Gastrocnemius medialis (tissue), 4 donors: ENCODE measurements at regions of chr3 and their contacts with region 1.

Region 1: DNA sequence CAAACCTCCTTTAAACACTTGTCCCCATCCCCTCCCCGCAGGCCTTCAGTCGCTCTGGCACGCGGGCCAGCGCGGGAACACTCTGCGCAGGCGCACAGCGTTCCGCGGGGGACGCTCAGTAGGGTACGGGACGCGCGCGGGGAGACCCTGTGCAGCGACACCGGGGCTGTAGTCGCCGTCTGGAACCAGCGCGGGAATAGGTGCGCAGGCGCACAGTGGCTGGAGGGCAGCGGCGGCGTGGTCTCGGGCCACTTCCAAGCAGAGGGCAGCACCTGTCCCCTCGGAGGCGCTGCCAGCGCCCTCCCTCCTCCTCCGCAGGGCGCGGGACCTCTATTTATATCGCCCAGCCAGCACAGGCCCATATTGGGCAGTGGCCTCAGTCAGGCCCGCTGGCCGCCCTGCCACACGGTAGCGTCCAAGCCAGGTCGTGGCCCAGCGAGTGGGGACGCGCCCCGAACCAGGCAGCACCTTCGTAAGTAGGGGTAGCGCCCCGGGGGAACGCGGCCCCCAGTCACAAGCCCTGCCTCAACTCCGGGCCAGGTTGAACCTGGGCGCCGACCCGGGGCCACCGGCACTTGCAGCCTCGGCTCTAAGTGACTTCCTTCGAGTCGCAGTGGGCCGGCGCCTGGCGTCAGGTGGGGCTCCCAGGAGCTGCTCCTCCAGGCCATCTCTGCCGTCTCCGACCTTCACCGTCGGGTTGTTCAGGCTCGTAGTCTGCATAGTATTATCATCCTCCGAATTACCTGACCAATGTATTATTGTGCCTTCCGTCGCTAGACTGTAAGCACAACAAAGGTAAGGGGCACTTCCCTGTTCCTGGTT is at the start of gene KBTBD12:
- DNase-seq: peak; percentile 87 to 96
- ATAC-seq: peak; percentile 84 to 87
- H3K4me3 ChIP-seq: peak within 1 kb of the TSS; percentile 66 to 80 (median 69)
- H3K27ac ChIP-seq: peak within 1 kb of the TSS; percentile 95 to 98 (median 98)
- H3K4me1 ChIP-seq: peaks cover 41 to 43% of the 10 kb centered on the region in 2 donors
- H3K27me3 ChIP-seq: no peaks in the 10 kb centered on the region
- CTCF ChIP-seq: no peak
- POLR2A ChIP-seq: peak; percentile 96
- total RNA-seq, gene KBTBD12: 16.0 to 28.7 (median 22.1) TPM

Region 2: GRCh38 chr3:127899766-127900165 is 15.6 kb before region 1 on chr3:
- in situ Hi-C with region 1: no loop called
- intact Hi-C with region 1: no loop called
- DNase-seq: no peak
- ATAC-seq: no peak
- H3K4me3 ChIP-seq: no peak overlapping the region
- H3K27ac ChIP-seq: no peak overlapping the region
- H3K4me1 ChIP-seq: no peaks in the 10 kb centered on the region
- H3K27me3 ChIP-seq: no peaks in the 10 kb centered on the region
- CTCF ChIP-seq: no peak
- POLR2A ChIP-seq: no peak

Region 3: DNA sequence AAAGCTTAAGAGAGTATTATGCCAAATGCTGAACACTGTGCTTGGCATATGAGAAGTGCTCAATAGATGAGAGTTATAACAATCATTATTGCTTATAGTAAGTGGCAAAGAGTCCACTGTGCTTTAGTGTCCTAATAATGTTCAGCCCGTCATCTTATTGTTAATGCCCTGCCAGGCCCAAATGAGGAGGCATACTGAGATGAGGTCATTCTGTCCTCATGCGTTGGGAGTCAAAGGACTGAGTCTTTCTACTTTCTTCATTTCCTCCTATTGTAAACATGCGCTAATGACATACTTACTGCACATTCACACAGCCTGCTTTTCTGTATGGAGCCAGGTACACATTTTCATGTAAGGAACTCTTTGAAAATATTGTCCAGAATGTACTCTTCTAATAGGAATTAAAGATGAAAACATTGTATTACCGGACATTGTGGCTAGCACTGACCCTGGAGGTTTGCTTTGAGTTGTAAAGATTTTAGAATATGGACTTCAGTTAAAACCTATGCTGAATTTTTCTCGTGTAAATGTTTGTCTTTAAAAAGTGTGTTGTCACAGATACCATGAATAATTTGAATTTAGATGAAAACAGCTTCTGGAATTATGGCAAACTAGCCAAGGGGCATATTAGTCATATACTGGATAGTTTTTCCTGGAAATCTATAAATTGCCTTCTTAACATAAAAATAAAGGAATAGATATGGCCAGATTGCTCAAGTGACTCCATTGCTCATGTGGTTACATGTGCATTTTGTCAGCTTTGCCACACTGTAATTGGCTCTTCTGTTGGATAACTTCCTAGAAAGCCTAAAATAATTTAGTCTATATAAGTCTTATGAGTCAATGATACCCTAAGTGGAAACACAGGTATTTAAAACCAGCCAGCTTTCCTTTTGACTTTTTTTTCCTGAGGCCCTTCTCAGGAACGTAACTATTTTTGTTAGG is 38.0 kb after region 1 on chr3:
- in situ Hi-C with region 1: no loop called
- intact Hi-C with region 1: loop called (anchors 1 kb)
- DNase-seq: no peak
- ATAC-seq: peak; percentile 76 to 88
- H3K4me3 ChIP-seq: no peak overlapping the region
- H3K27ac ChIP-seq: peak overlapping the region; percentile 85 to 95 (median 90)
- H3K4me1 ChIP-seq: peaks cover 54 to 64% of the 10 kb centered on the region in 2 donors
- H3K27me3 ChIP-seq: no peaks in the 10 kb centered on the region
- CTCF ChIP-seq: no peak
- POLR2A ChIP-seq: no peak